GM12878 (cell line): ENCODE measurements at regions of chr1 and their contacts with region 1.

Region 1: DNA sequence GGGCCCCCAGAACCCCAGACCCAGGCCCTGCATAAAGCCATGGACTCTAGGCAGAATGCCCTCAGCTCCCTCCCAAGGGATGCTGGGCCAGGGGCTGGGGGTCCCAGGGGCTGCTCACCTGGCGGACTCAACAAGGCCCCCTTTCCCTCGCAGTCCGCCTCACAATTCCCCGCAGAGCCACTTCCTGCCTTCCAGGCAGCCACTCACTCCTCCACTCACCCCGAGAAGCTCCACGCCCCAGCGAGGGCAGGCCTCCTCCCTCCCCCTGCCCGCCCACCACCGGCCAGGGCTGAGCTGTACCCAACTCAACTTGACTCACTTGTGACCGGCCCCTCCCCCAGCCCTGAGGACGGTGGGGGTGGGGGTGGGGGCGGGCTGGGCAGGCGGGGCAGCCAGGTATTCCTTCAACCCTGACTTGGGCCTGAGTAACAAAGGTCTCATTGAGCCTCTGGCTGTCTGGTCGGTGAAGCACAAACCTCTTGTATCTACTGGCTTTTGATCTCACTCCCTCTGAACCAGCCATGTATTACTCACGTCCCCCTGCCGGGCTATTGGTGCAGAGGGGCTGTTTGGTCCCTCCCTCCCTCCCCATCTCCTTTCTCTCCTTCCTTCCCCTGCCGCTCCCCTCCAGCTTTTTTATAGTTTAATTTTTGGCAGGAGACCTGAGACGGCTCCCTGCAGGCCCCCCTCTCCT is 5.9 kb downstream of the BLACAT1 start:
- DNase-seq: no peak
- ATAC-seq: peak; percentile 89
- H3K4me3 ChIP-seq: no peak overlapping the region
- H3K27ac ChIP-seq: no peak overlapping the region
- H3K4me1 ChIP-seq: peaks cover 5% of the 10 kb centered on the region; the same call in 1 of the 2 replicates
- H3K27me3 ChIP-seq: peaks cover 3 to 5% of the 10 kb centered on the region in 2 experiments; a peak in 3 of 4 replicates
- CTCF ChIP-seq: no peak
- EP300 ChIP-seq: no peak
- POLR2A ChIP-seq: no peak
- RAD21 ChIP-seq: no peak

Region 2: DNA sequence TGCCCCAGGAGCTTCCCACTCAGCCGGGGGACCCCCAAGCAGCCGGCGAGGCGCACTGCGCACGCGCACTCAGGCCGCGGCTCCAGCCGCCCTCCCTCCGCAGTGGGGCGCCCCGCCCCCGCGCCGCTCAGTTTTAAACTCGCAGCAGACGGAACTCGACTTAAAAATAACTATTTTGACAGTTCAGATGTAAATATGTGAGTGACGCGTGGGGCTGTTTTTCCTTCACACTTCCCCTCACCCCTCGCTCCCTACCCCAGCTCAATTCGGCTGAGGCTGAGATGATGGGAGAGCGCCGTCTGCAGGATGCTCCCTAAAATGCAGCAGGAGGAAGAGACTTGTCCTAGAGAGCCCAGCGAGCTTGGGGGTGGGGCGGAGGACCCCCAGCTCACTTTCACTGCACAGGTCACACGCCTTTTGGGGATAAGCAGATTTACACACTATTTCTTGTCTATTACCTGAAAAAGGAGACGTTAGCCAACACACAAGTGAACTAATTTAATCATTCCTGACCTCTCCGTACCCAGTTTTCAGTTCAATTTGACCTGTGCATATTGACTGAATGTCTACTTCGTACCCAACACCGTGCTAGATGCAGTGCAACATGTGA is 19.1 kb before region 1 on chr1:
- CTCF ChIA-PET with region 1: interaction called, 18 read pairs
- POLR2A ChIA-PET with region 1: interaction called, 4 read pairs
- RAD21 ChIA-PET with region 1: interaction called, 9 read pairs
- SMC1A ChIA-PET with region 1: interaction called, 9 read pairs
- in situ Hi-C with region 1: no loop called
- intact Hi-C with region 1: no loop called
- DNase-seq: peak; percentile 13
- ATAC-seq: peak; percentile 85
- H3K4me3 ChIP-seq: peak overlapping the region; percentile 54; the same call in 1 of the 2 replicates
- H3K27ac ChIP-seq: no peak overlapping the region
- H3K4me1 ChIP-seq: peaks cover 3% of the 10 kb centered on the region
- H3K27me3 ChIP-seq: peaks cover 3 to 4% of the 10 kb centered on the region in 2 experiments; a peak in 2 of 4 replicates
- CTCF ChIP-seq: peak; percentile 53 to 85 (median 72)
- EP300 ChIP-seq: peak in 1 of 2 experiments; percentile 38; a peak in 1 of 4 replicates
- POLR2A ChIP-seq: no peak
- RAD21 ChIP-seq: peak; percentile 45

Region 3: DNA sequence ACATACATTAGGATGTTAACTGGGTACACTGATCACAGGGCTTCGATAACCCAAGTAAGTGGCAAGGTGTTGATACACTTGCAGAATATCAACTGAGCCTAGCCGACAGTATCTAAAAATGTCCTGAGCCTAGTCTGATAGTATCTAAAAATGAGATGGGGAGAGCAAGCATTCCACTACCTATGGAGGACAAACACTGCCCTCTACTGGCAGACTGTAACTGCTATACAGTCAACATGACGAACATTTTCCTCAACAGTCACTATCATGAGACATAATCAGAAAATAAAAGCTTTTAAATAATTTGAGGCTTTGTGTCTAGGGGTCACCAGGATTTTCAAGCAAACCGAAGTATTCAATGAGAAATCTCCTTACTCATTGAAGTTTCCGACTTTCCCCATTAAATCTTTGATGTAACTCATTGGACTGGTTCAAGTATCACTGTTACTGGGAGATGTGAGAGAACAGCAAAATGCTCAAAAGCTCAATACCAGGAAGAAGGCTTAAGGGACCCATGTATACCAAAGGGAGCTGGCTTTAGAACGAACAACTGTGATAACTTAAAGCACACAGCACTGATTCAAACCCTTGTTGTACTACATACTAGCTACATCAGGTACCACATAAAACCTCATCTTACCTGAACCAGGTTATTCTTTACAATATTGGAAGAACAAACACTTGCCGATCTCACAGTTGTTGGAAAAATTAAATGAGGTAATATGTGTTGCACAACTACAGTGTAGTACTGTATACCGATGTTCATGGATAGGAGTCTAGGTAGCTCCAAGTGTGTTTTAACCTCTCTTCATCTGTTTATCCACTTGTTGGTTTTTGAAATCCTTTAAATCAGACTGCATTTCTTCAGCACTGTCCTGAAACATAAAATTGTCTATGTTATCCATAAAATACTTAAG is 261.5 kb after region 1 on chr1:
- CTCF ChIA-PET with region 1: no interaction called
- POLR2A ChIA-PET with region 1: no interaction called
- RAD21 ChIA-PET with region 1: no interaction called
- SMC1A ChIA-PET with region 1: no interaction called
- in situ Hi-C with region 1: no loop called
- intact Hi-C with region 1: no loop called
- DNase-seq: peak; percentile 62
- ATAC-seq: peak; percentile 99
- H3K4me3 ChIP-seq: no peak overlapping the region
- H3K27ac ChIP-seq: no peak overlapping the region
- H3K4me1 ChIP-seq: no peaks in the 10 kb centered on the region
- H3K27me3 ChIP-seq: no peaks in the 10 kb centered on the region
- CTCF ChIP-seq: peak; percentile 77 to 95 (median 92)
- EP300 ChIP-seq: no peak
- POLR2A ChIP-seq: no peak
- RAD21 ChIP-seq: peak; percentile 91